MCF 10A (cell line): ENCODE measurements at regions of chr11 and their contacts with region 1.

Region 1: DNA sequence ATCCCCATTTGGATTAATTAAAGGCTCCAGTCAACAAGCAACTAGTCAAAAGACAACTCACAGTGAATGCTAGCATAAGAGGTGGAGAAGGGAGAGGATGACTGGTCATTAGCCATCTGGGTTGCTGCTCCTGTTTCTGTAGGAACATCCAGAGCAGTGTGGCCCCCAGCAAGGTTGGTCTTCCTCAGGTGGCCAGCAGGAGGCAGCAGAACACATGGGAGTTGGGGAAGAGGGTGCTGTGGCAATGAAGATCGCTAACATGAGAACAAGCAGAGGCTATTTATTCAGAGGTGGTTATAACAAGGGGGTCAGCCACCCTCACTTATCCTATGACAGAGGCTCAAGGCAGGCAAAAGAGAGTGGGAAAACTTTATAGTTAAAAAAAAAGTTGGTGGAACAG is 21.3 kb downstream of the IZUMO1R start:
- DNase-seq: peak; percentile 67
- H3K4me3 Mint-ChIP-seq: no peak overlapping the region
- H3K27ac Mint-ChIP-seq: no peak overlapping the region
- H3K4me1 Mint-ChIP-seq: peaks cover 3% of the 10 kb centered on the region
- H3K27me3 Mint-ChIP-seq: peaks cover 20% of the 10 kb centered on the region
- CTCF ChIP-seq: peak; percentile 54

Region 2: GRCh38 chr11:94504689-94505293 is 179.1 kb after region 1 on chr11:
- CTCF ChIA-PET with region 1: no interaction called
- POLR2A ChIA-PET with region 1: no interaction called
- intact Hi-C with region 1: loop called (anchors 1 kb)
- DNase-seq: peak; percentile 61
- H3K4me3 Mint-ChIP-seq: no peak overlapping the region
- H3K27ac Mint-ChIP-seq: no peak overlapping the region
- H3K4me1 Mint-ChIP-seq: no peaks in the 10 kb centered on the region
- H3K27me3 Mint-ChIP-seq: no peaks in the 10 kb centered on the region
- CTCF ChIP-seq: peak; percentile 34

Region 3: DNA sequence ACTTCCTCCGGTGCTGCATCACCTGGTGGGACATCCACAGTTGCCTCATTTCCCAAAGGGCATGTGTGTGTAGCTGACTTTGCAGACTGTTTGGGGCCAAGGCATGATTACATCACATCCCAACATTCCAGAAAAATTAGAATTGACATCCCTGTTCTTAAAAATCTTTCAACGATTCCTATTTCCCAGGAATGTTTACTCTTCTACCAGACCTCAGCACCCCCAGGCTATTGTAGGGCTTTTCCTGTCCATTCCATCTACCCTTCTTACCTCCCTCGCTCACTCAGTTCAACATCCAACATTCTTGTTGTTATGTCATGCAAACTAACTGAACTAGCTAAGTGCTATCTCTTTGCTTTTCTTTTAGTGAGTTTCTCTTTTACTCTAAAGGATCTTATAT is 278.8 kb after region 1 on chr11:
- CTCF ChIA-PET with region 1: no interaction called
- POLR2A ChIA-PET with region 1: no interaction called
- intact Hi-C with region 1: no loop called
- DNase-seq: no peak
- H3K4me3 Mint-ChIP-seq: no peak overlapping the region
- H3K27ac Mint-ChIP-seq: no peak overlapping the region
- H3K4me1 Mint-ChIP-seq: no peaks in the 10 kb centered on the region
- H3K27me3 Mint-ChIP-seq: no peaks in the 10 kb centered on the region
- CTCF ChIP-seq: no peak